ENCODE measurements at regions of chr9 and their contacts with region 1.

Region 1: GRCh38 chr9:5352637-5353455 is 13.2 kb upstream of the RLN1 start:
- DNase-seq: peak; percentile 71
- ATAC-seq: peak; percentile 95
- H3K4me3 Mint-ChIP-seq: peak overlapping the region; percentile 17
- H3K27ac Mint-ChIP-seq: peak overlapping the region; percentile 77
- H3K4me1 Mint-ChIP-seq: peaks cover 29% of the 10 kb centered on the region
- H3K27me3 Mint-ChIP-seq: no peaks in the 10 kb centered on the region

Region 2: DNA sequence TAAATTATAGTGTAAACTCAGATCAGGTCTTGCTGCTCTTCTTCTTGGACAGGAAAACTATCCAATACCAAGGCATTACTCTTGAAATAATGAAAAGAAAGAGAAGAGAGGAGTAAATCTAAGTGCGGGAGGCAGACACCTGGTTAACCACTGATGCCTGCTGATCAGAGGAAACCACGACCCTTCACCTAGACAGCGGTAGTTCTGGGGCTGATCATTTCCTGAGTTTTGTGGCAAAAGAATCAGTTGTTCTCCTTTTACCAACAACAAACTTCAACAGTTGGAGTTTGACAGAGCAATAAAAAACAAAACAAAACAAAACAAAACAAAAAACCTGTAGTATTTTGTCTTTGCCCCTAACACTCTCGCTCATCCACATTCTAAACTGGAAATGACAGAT is 16.2 kb before region 1 on chr9:
- CTCF ChIA-PET with region 1: interaction called, 10 read pairs
- DNase-seq: peak; percentile 72
- ATAC-seq: no peak
- H3K4me3 Mint-ChIP-seq: peak overlapping the region; percentile 39
- H3K27ac Mint-ChIP-seq: peak overlapping the region; percentile 61
- H3K4me1 Mint-ChIP-seq: peaks cover 25% of the 10 kb centered on the region
- H3K27me3 Mint-ChIP-seq: no peaks in the 10 kb centered on the region

Region 3: GRCh38 chr9:5375091-5375490 is 22.2 kb after region 1 on chr9:
- CTCF ChIA-PET with region 1: no interaction called
- DNase-seq: no peak
- ATAC-seq: peak; percentile 60
- H3K4me3 Mint-ChIP-seq: no peak overlapping the region
- H3K27ac Mint-ChIP-seq: peak overlapping the region; percentile 16
- H3K4me1 Mint-ChIP-seq: peaks cover 25% of the 10 kb centered on the region
- H3K27me3 Mint-ChIP-seq: no peaks in the 10 kb centered on the region

Region 4: GRCh38 chr9:5402217-5402616 is 49.4 kb after region 1 on chr9:
- CTCF ChIA-PET with region 1: no interaction called
- DNase-seq: no peak
- ATAC-seq: no peak
- H3K4me3 Mint-ChIP-seq: no peak overlapping the region
- H3K27ac Mint-ChIP-seq: no peak overlapping the region
- H3K4me1 Mint-ChIP-seq: peaks cover 8% of the 10 kb centered on the region
- H3K27me3 Mint-ChIP-seq: no peaks in the 10 kb centered on the region

Measured in activated CD8-positive, alpha-beta memory T cell treated with anti-CD3 and anti-CD28 coated beads, Interleukin-2, amount 10 ng/mL, durations not matched to agents 7 days and 5 days (primary cell).